ENCODE measurements at regions of chr17 and their contacts with region 1.

Region 1: DNA sequence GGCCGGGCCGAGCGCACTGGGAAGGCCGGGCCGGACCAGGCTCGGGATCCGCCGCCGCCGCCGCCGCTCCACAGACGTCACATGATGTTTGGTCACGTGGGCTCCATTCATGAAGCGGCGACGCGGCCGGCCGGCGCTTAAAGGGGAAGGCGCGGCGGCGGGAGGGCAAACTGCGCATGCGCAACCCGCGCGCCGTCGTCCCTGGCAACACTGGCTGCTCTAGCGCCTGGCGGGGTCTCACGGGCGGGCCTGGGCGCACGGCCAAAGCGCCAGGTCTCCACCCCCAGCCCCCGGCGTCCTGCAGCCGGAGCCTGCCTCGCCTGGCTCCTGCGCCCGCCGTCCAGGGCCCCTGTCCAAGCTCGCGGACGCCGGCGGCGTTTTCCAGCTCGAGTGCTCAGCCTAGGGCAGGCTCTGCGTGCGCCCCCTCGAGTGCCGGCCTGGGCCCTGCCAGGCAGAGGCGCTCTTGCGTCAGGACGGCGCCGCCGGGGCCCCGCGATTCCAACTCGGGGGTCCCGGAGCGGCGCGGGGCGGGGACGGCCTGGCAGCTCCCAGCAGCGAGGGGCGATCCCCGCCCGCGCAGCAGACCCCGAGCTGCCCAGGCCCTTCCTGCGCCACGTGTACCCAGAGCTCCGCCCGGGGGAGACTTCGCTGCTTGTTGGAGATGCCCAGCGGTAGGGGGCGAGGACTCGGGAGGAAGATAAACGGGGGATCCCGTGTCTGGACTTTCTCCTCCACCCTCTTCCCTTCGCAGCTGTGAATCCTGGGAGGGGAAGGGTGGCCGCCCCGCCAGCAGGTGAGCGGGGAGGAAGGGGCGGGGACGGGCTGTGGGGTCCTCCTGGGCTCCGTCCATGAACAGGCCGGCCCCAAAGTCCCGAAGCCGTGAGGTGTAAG is at the start of gene MAFG:
- DNase-seq: peak; percentile 93
- ATAC-seq: peak; percentile 60
- H3K4me3 Mint-ChIP-seq: peak within 1 kb of the TSS; percentile 88
- H3K27ac Mint-ChIP-seq: peak within 1 kb of the TSS; percentile 85
- H3K4me1 Mint-ChIP-seq: peaks cover 33% of the 10 kb centered on the region
- H3K27me3 Mint-ChIP-seq: peaks cover 7% of the 10 kb centered on the region
- CTCF ChIP-seq: no peak
- total RNA-seq, gene MAFG: 27.9 and 30.7 TPM in 2 replicates

Region 2: GRCh38 chr17:81711814-81712467 is 216.0 kb before region 1 on chr17 and contains the start of gene SLC25A10:
- CTCF ChIA-PET with region 1: no interaction called
- POLR2A ChIA-PET with region 1: no interaction called
- intact Hi-C with region 1: no loop called
- DNase-seq: peak; percentile 82
- ATAC-seq: peak; percentile 89
- H3K4me3 Mint-ChIP-seq: peak within 1 kb of the TSS; percentile 84
- H3K27ac Mint-ChIP-seq: peak within 1 kb of the TSS; percentile 19
- H3K4me1 Mint-ChIP-seq: peaks cover 17% of the 10 kb centered on the region
- H3K27me3 Mint-ChIP-seq: no peaks in the 10 kb centered on the region
- CTCF ChIP-seq: no peak
- total RNA-seq, gene SLC25A10: 6.1 and 6.4 TPM in 2 replicates

Region 3: DNA sequence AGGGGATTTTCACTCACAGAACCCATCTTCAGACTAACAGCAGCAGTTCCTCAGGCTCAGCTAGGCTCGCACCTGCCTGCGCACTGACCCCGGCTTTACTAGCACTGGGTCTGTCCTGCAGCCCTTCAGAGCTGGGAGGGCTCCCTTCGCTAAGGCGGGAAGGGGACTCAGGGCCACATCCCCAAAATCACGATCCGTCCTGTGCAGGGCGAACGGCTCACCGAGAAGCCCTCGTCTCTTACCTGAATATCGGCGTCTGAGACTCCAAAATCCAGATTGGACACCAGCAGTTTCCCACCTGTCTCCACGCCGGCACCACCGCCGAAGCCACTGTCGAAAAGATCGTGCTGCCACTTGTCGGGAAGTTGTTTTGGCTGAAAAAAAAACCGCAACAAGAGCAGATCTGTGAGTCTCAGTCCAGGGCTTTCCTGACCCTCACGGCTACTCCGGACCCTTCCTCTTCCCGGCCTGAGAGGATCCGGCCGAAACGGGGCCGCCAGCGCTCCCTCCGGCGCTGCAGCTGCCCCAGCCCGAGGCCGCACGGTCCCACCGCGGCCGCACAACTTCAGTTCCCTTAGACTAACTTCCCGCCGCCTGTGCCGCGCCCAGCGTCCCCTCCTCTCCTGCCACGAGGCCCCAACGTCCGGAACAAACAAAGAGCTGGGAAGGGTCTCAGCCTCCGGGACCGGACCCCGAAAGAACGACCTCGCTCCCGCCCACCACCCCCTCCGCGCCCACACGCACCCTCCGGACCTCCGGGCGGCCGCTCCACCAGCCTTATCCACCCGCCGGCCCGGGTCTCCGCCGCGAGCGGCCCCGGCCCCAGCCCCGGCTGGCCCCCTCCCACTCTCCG is 37.2 kb before region 1 on chr17:
- CTCF ChIA-PET with region 1: interaction called, 3 read pairs
- POLR2A ChIA-PET with region 1: interaction called, 5 read pairs
- intact Hi-C with region 1: loop called (anchors 1 kb)
- DNase-seq: no peak
- ATAC-seq: no peak
- H3K4me3 Mint-ChIP-seq: peak overlapping the region; percentile 88
- H3K27ac Mint-ChIP-seq: peak overlapping the region; percentile 84
- H3K4me1 Mint-ChIP-seq: peaks cover 30% of the 10 kb centered on the region
- H3K27me3 Mint-ChIP-seq: no peaks in the 10 kb centered on the region
- CTCF ChIP-seq: no peak

Region 4: GRCh38 chr17:81911277-81911961 is 16.5 kb before region 1 on chr17 and contains the start of gene PCYT2:
- CTCF ChIA-PET with region 1: no interaction called
- POLR2A ChIA-PET with region 1: interaction called, 28 read pairs
- intact Hi-C with region 1: loop called (anchors 1 kb)
- DNase-seq: peak; percentile 84
- ATAC-seq: peak; percentile 95
- H3K4me3 Mint-ChIP-seq: peak within 1 kb of the TSS; percentile 85
- H3K27ac Mint-ChIP-seq: peak within 1 kb of the TSS; percentile 65
- H3K4me1 Mint-ChIP-seq: peaks cover 15% of the 10 kb centered on the region
- H3K27me3 Mint-ChIP-seq: no peaks in the 10 kb centered on the region
- CTCF ChIP-seq: no peak
- total RNA-seq, gene PCYT2: 40.3 and 44.1 TPM in 2 replicates

Region 5: DNA sequence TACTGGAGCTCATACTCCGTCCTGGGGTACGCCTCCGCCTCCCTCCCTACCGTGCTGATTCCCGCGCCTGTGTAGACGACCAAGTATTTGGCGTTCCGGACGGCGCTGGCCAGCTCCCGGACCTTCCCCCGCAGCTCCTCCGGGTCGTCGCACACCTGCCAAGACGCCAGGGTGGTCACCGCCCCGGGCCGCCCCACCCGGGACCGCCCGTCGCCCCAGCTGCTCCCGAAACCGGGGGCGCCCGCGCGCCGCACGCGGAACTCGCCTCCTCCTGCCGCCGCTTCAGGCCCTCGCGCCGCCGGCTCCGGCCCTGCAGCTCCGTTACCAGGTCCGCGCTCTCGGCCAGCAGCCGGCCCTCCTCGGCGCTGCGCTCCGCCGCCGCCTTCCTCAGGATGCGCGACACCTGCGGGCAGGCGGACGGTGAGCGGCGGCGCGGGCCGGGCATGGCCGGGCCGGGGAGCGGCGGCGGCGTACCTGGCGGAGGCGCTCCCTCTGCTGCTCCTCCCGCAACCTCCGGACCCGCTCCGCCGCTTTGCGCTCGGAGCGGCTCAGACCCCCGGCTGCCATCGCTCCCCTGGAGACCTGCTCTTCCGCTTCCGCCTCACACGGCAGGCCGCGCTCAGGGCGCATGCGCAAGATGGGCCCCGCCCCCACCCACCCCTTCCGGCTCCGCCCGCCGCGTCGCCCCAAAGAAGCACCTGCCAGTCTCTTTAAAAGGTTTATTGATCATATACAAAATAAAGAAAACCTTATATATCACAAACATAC is 10.1 kb before region 1 on chr17 and contains the start of gene SIRT7:
- CTCF ChIA-PET with region 1: interaction called, 6 read pairs
- POLR2A ChIA-PET with region 1: interaction called, 28 read pairs
- intact Hi-C with region 1: loop called (anchors 1 kb)
- DNase-seq: peak; percentile 74
- ATAC-seq: peak; percentile 88
- H3K4me3 Mint-ChIP-seq: peak within 1 kb of the TSS; percentile 88
- H3K27ac Mint-ChIP-seq: peak within 1 kb of the TSS; percentile 76
- H3K4me1 Mint-ChIP-seq: peaks cover 25% of the 10 kb centered on the region
- H3K27me3 Mint-ChIP-seq: no peaks in the 10 kb centered on the region
- CTCF ChIP-seq: no peak
- total RNA-seq, gene SIRT7: 57.6 and 66.4 TPM in 2 replicates

Region 6: GRCh38 chr17:81941790-81942553 is 14.1 kb after region 1 on chr17:
- CTCF ChIA-PET with region 1: no interaction called
- POLR2A ChIA-PET with region 1: interaction called, 19 read pairs
- intact Hi-C with region 1: loop called (anchors 1 kb)
- DNase-seq: no peak
- ATAC-seq: no peak
- H3K4me3 Mint-ChIP-seq: no peak overlapping the region
- H3K27ac Mint-ChIP-seq: no peak overlapping the region
- H3K4me1 Mint-ChIP-seq: peaks cover 9% of the 10 kb centered on the region
- H3K27me3 Mint-ChIP-seq: peaks cover 4% of the 10 kb centered on the region
- CTCF ChIP-seq: no peak

Region 7: DNA sequence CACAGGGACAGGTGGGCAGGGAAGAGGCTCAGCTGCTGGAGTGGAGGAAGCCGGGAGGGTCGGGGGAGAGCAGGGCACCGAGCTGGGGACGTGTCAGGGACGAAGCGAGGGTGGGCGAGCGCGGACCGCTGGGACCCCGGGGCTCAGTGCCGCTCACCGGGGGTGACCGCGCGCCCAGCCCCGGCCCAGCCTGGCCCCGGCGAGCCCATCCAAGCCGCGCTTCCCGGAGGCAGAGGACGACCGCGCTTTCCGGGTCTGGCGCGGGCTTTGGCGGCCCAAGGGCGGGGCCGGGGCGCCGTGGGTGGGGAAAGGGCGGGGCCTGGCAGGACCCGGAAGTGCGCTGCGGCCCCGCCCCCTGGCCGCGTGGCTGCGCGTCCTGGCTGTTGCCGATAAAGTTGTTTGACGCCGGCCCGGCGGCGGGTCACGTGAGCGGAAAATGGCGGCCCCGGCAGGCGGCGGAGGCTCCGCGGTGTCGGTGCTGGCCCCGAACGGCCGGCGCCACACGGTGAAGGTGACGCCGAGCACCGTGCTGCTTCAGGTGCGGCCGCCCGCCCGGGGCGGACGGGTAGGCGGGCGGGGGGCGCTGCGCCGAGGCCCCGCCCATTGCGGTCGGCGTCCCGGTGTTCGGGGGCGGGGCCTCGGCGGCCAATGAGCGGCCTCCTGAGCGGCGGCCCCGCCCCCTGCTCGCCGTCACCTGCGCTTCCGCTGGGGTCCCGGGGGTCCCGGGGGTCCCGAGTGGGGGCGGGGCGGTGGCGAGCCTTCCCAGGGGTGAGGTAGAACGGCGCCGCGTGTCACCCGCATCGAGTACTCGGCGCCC is 49.5 kb after region 1 on chr17 and contains the start of gene ASPSCR1:
- CTCF ChIA-PET with region 1: no interaction called
- POLR2A ChIA-PET with region 1: interaction called, 4 read pairs
- intact Hi-C with region 1: loop called (anchors 1 kb)
- DNase-seq: peak; percentile 94
- ATAC-seq: peak; percentile 92
- H3K4me3 Mint-ChIP-seq: peak within 1 kb of the TSS; percentile 95
- H3K27ac Mint-ChIP-seq: peak within 1 kb of the TSS; percentile 93
- H3K4me1 Mint-ChIP-seq: peaks cover 27% of the 10 kb centered on the region
- H3K27me3 Mint-ChIP-seq: no peaks in the 10 kb centered on the region
- CTCF ChIP-seq: no peak
- total RNA-seq, gene ASPSCR1: 40.0 and 50.0 TPM in 2 replicates

Measured in activated B cell treated with CpG ODN at 0.5 μM for 24 hours (primary cell).